ENCODE measurements at regions of chr14 and their contacts with region 1.

Region 1: GRCh38 chr14:77457522-77458290 is at the starts of genes AHSA1 and VIPAS39:
- DNase-seq: peak; percentile 98
- ATAC-seq: peak; percentile 96
- H3K4me3 Mint-ChIP-seq: peak within 1 kb of the TSS; percentile 99
- H3K27ac Mint-ChIP-seq: peak within 1 kb of the TSS; percentile 100
- H3K4me1 Mint-ChIP-seq: peaks cover 39% of the 10 kb centered on the region
- H3K27me3 Mint-ChIP-seq: no peaks in the 10 kb centered on the region
- CTCF ChIP-seq: no peak
- total RNA-seq, gene AHSA1: 325 to 339 TPM
- total RNA-seq, gene VIPAS39: 13.9 to 16.8 TPM

Region 2: GRCh38 chr14:77320238-77320935 is 137.3 kb before region 1 on chr14 and contains the start of gene POMT2:
- CTCF ChIA-PET with region 1: interaction called, 10 read pairs
- POLR2A ChIA-PET with region 1: no interaction called
- intact Hi-C with region 1: loop called (anchors 5 kb)
- DNase-seq: peak; percentile 94
- ATAC-seq: peak; percentile 52
- H3K4me3 Mint-ChIP-seq: peak within 1 kb of the TSS; percentile 92
- H3K27ac Mint-ChIP-seq: peak within 1 kb of the TSS; percentile 100
- H3K4me1 Mint-ChIP-seq: peaks cover 18% of the 10 kb centered on the region
- H3K27me3 Mint-ChIP-seq: no peaks in the 10 kb centered on the region
- CTCF ChIP-seq: peak; percentile 60
- total RNA-seq, gene POMT2: 14.2 to 15.3 TPM

Region 3: GRCh38 chr14:77390188-77390587 is 67.5 kb before region 1 on chr14:
- CTCF ChIA-PET with region 1: no interaction called
- POLR2A ChIA-PET with region 1: no interaction called
- intact Hi-C with region 1: no loop called
- DNase-seq: no peak
- ATAC-seq: no peak
- H3K4me3 Mint-ChIP-seq: no peak overlapping the region
- H3K27ac Mint-ChIP-seq: no peak overlapping the region
- H3K4me1 Mint-ChIP-seq: no peaks in the 10 kb centered on the region
- H3K27me3 Mint-ChIP-seq: no peaks in the 10 kb centered on the region
- CTCF ChIP-seq: no peak

Region 4: GRCh38 chr14:77416836-77417235 is 40.9 kb before region 1 on chr14:
- CTCF ChIA-PET with region 1: no interaction called
- POLR2A ChIA-PET with region 1: no interaction called
- intact Hi-C with region 1: no loop called
- DNase-seq: no peak
- ATAC-seq: no peak
- H3K4me3 Mint-ChIP-seq: no peak overlapping the region
- H3K27ac Mint-ChIP-seq: no peak overlapping the region
- H3K4me1 Mint-ChIP-seq: no peaks in the 10 kb centered on the region
- H3K27me3 Mint-ChIP-seq: no peaks in the 10 kb centered on the region
- CTCF ChIP-seq: no peak

Region 5: DNA sequence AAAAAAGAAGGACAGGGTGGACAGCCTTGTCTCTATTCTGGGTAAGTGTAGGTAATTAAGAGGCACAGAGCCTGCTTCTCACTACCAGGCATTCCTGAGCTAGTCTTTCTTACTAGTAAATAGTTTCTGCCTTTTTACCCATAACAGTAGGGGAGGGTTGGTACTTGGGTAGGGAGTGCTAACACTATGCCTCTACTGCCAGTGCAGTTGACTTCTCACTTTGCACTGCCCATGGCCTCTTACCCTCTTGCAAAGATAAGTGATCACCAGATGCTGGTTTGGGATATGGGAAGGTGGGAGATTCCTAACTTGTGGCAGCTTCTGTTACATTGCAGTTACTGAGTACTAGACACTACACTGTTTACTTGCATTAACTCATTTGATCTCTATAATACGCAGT is 11.8 kb after region 1 on chr14:
- CTCF ChIA-PET with region 1: interaction called, 12 read pairs
- POLR2A ChIA-PET with region 1: interaction called, 5 read pairs
- intact Hi-C with region 1: no loop called
- DNase-seq: no peak
- ATAC-seq: no peak
- H3K4me3 Mint-ChIP-seq: no peak overlapping the region
- H3K27ac Mint-ChIP-seq: no peak overlapping the region
- H3K4me1 Mint-ChIP-seq: no peaks in the 10 kb centered on the region
- H3K27me3 Mint-ChIP-seq: no peaks in the 10 kb centered on the region
- CTCF ChIP-seq: no peak

Region 6: DNA sequence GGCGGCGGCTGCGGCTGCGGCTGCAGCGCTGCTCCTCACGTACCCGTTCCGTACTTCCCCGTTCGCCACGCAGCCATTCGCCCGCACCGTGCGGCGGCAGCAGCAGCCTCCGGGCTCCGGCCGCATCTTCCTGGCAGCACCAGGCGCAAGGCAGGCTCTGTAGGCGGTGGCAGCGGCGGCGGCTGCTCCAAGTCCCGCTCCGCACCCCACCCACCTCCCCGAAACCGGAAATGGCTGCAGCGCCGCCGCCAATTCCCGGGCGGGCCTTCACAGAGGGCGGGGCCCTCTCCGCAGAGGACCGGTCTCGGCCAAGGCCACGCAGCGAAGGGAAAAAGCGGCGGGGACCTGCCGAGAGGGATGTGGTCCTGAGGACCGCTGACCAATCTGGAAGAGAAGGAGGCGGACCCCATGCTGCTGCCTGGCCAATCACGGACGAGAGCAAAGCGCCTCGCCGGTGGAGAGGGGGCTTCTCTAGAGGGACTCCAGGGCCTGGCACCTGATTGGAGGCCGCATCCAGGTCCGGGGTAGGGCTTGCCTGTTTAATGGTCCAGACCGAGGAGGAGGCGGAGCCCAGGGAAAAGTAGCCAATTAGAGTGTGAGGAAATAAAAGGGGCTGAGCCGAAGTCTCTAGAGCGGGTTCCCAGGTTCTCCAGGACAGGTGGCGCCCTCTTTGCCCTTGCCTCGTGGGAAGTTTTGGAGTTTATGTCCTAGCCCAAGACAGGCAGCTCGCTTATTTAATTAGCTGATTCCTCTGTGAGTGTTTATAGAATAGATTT is 158.9 kb after region 1 on chr14 and contains the start of gene SPTLC2:
- CTCF ChIA-PET with region 1: interaction called, 7 read pairs
- POLR2A ChIA-PET with region 1: no interaction called
- intact Hi-C with region 1: loop called (anchors 5 kb)
- DNase-seq: peak; percentile 99
- ATAC-seq: peak; percentile 98
- H3K4me3 Mint-ChIP-seq: peak within 1 kb of the TSS; percentile 85
- H3K27ac Mint-ChIP-seq: peak within 1 kb of the TSS; percentile 87
- H3K4me1 Mint-ChIP-seq: peaks cover 28% of the 10 kb centered on the region
- H3K27me3 Mint-ChIP-seq: no peaks in the 10 kb centered on the region
- CTCF ChIP-seq: no peak
- total RNA-seq, gene SPTLC2: 23.7 to 30.2 TPM

Region 7: GRCh38 chr14:77649326-77649725 is 191.6 kb after region 1 on chr14:
- CTCF ChIA-PET with region 1: no interaction called
- POLR2A ChIA-PET with region 1: no interaction called
- intact Hi-C with region 1: no loop called
- DNase-seq: no peak
- ATAC-seq: no peak
- H3K4me3 Mint-ChIP-seq: no peak overlapping the region
- H3K27ac Mint-ChIP-seq: no peak overlapping the region
- H3K4me1 Mint-ChIP-seq: no peaks in the 10 kb centered on the region
- H3K27me3 Mint-ChIP-seq: no peaks in the 10 kb centered on the region
- CTCF ChIP-seq: no peak

Measured in activated CD8-positive, alpha-beta T cell treated with anti-CD3 and anti-CD28 coated beads for 36 hours (primary cell).